ENCODE measurements at regions of chr10 and their contacts with region 1.

Region 1: GRCh38 chr10:99489271-99489670 is 43.5 kb upstream of the NKX2-3 start:
- DNase-seq: no peak
- H3K4me3 ChIP-seq: no peak overlapping the region
- H3K27ac ChIP-seq: no peak overlapping the region
- H3K4me1 ChIP-seq: no peaks in the 10 kb centered on the region
- H3K27me3 ChIP-seq: peaks cover 38% of the 10 kb centered on the region
- CTCF ChIP-seq: no peak

Region 2: DNA sequence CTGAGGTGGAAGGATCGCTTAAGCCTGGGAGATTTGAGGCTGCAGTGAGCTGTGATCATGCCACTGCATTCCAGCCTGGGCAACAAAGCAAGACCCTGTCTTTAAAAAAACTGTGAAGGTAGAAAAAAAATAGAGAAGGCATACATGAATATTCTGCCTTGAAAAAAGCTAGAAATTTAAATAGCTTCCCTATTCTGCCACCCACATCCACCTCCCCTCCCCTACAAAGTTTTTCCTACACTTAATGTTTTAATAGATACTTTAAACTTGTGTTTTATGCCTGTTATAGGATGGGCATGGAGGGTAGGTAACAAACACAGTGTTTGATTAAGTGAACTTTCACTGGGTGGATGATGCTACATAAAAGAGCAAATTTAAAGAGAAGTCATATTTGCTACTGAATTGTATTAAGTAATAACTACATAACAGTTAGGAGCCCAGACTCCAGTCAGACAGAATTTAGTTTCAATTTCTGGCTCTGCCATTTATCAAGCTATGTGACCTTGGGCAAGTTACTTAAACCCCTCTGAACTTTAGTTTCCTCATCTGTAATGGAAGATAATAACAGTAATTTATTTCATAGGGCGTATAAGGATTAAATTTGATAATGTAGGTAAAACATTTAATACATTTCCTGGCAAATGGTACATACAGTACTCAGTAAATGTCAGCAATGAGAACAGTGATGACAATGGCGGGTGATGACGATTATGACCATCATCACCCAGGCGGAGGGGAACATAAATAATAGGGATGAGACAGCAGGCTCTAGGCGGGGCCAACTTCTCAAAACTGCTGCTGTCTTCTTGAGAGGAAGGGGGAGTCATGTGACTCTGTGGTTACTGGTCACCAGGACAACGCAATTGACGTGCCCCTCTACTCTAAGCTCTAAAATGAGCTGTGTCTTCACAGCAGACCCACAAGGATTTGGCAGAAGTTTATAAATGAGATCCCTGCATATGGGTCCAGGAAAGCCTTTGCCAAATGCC is 504.7 kb after region 1 on chr10:
- CTCF ChIA-PET with region 1: interaction called, 11 read pairs
- POLR2A ChIA-PET with region 1: no interaction called
- intact Hi-C with region 1: no loop called
- DNase-seq: no peak
- H3K4me3 ChIP-seq: no peak overlapping the region
- H3K27ac ChIP-seq: no peak overlapping the region
- H3K4me1 ChIP-seq: no peaks in the 10 kb centered on the region
- H3K27me3 ChIP-seq: no peaks in the 10 kb centered on the region
- CTCF ChIP-seq: no peak

Region 3: DNA sequence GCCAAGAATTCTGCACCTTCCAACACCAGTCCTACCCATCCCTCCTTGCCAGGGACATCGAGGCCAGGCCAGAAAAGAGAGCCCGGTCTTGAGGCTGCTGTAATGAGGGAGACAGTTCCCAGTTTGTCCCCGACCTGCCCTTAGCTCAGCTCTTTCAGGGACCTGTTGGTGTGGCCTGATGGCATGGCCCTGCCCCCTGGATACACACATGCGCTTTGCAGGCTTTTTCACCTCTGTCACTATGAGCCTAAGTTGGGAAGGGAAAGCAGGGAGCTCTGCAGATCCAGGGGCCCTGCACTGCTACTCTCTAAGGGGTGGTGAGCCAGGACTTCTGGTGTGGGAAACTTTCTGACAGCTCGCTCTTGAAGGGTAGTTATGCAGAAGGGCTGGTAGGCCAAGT is 859.8 kb after region 1 on chr10:
- CTCF ChIA-PET with region 1: no interaction called
- POLR2A ChIA-PET with region 1: no interaction called
- intact Hi-C with region 1: no loop called
- DNase-seq: no peak
- H3K4me3 ChIP-seq: peak overlapping the region; percentile 84
- H3K27ac ChIP-seq: no peak overlapping the region
- H3K4me1 ChIP-seq: peaks cover 49% of the 10 kb centered on the region
- H3K27me3 ChIP-seq: no peaks in the 10 kb centered on the region
- CTCF ChIP-seq: no peak